AG04450 (cell line): ENCODE measurements at regions of chr1 and their contacts with region 1.

Region 1: GRCh38 chr1:94463765-94464330 is 45.7 kb downstream of the ABCD3 start:
- DNase-seq: peak; percentile 21
- H3K4me3 ChIP-seq: no peak overlapping the region
- H3K27ac ChIP-seq: no peak overlapping the region
- H3K27me3 ChIP-seq: no peaks in the 10 kb centered on the region
- CTCF ChIP-seq: peak; percentile 71

Region 2: GRCh38 chr1:93851327-93851712 is 612.5 kb before region 1 on chr1:
- CTCF ChIA-PET with region 1: no interaction called
- POLR2A ChIA-PET with region 1: no interaction called
- DNase-seq: no peak
- H3K4me3 ChIP-seq: no peak overlapping the region
- H3K27ac ChIP-seq: no peak overlapping the region
- H3K27me3 ChIP-seq: no peaks in the 10 kb centered on the region
- CTCF ChIP-seq: no peak

Region 3: DNA sequence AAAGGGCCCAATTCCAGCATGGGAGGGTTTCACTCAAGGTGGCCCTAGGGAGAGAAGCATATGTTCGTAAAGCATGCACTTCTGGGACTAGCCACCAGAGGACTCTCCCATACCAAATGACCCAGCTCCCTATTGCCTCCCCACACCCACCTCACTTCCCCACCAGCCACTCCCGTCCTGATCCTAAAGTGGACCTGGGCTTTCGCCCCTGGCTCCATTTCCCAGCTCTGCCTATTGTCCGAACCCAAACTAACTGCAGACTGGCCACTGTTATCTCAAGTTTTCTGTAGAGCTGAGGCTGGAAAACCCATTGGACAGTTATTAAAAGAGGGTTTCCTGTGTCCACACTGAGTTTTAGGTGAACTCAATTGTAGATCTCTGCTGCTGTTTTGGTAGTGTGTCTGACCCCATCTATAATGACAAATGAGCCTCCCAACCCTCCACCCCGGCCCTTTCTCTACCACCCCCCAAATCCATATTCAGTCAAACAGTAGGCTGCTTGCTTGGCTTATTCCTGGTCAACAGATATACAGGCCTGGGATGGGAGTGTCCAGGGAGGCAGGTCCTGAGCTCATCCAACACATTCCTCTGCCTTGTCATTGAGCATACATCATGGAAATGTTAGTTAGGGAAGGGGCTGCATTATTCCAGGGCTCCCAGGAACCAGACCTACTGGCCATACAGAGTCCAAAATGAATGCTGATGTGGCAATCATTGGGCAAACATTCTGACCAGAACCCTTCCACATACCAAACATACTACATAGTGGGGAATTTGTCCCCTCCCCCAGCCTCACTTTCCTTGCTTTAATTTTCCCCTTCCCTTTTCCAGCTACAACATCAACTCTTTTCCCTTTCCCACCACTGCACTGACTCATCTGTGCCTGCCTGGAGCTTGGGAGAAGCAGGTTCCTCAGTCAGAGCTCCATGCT is 402.1 kb before region 1 on chr1:
- CTCF ChIA-PET with region 1: interaction called, 21 read pairs
- POLR2A ChIA-PET with region 1: no interaction called
- DNase-seq: peak; percentile 57
- H3K4me3 ChIP-seq: no peak overlapping the region
- H3K27ac ChIP-seq: peak overlapping the region; percentile 33
- H3K27me3 ChIP-seq: no peaks in the 10 kb centered on the region
- CTCF ChIP-seq: peak; percentile 97

Region 4: DNA sequence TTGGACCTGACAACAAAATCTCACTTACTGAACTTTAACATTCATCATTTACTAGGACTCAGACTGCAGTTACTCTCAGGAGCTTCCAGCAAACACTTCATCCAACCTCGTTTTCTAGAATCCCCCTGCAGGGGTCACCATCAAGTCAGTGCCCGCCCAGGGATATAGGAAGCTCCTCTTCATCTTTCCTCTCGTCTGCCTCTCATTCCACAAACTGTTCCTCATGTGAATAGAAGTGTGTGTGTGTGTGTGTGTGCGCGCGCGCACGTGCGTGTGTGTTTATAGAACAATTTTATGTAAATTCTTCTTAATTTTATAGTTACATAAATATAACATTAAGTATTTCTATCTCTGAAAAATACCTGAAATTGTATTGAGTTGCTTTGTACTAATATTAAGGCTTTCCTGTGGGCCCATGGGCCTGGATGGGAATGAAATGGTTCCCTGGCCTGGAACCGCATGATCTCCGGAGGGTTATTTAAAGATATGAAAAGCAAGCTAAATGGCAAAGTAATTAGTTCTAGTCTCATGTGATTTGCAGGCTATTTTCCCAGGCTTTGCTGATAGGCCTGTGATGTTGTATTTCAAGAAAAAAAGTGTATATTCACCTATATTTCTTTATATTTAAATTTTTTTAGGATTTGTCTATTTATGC is 67.4 kb before region 1 on chr1:
- CTCF ChIA-PET with region 1: interaction called, 12 read pairs
- POLR2A ChIA-PET with region 1: no interaction called
- DNase-seq: no peak
- H3K4me3 ChIP-seq: no peak overlapping the region
- H3K27ac ChIP-seq: no peak overlapping the region
- H3K27me3 ChIP-seq: no peaks in the 10 kb centered on the region
- CTCF ChIP-seq: peak; percentile 20

Region 5: GRCh38 chr1:94425821-94426484 is 37.9 kb before region 1 on chr1:
- CTCF ChIA-PET with region 1: interaction called, 27 read pairs
- POLR2A ChIA-PET with region 1: no interaction called
- DNase-seq: no peak
- H3K4me3 ChIP-seq: no peak overlapping the region
- H3K27ac ChIP-seq: no peak overlapping the region
- H3K27me3 ChIP-seq: no peaks in the 10 kb centered on the region
- CTCF ChIP-seq: no peak

Region 6: DNA sequence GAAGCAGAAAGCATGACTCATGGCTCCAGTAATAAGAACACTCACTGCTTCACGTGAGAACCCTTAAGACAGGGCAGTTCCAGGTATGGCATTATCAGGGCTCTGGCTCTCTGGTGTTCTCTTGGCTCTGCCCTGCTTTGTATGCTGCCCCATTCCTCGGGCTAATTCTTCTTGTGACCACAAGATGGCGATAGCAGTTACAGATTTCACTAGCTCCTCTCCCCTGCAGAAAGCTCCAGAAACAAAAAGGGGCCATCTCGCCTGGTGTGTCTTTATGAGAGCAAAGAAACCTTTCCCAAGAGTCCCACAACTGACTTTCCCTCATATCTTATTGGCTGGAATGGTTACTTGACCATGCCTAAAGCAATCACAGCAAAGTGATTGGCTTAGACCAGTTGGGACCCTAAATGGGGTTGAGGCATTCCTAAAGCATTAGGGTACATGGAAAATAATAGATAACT is 17.7 kb after region 1 on chr1:
- CTCF ChIA-PET with region 1: interaction called, 56 read pairs
- POLR2A ChIA-PET with region 1: no interaction called
- DNase-seq: peak; percentile 51
- H3K4me3 ChIP-seq: no peak overlapping the region
- H3K27ac ChIP-seq: no peak overlapping the region
- H3K27me3 ChIP-seq: no peaks in the 10 kb centered on the region
- CTCF ChIP-seq: peak; percentile 89